ENCODE measurements at regions of chr1 and their contacts with region 1.

Region 1: DNA sequence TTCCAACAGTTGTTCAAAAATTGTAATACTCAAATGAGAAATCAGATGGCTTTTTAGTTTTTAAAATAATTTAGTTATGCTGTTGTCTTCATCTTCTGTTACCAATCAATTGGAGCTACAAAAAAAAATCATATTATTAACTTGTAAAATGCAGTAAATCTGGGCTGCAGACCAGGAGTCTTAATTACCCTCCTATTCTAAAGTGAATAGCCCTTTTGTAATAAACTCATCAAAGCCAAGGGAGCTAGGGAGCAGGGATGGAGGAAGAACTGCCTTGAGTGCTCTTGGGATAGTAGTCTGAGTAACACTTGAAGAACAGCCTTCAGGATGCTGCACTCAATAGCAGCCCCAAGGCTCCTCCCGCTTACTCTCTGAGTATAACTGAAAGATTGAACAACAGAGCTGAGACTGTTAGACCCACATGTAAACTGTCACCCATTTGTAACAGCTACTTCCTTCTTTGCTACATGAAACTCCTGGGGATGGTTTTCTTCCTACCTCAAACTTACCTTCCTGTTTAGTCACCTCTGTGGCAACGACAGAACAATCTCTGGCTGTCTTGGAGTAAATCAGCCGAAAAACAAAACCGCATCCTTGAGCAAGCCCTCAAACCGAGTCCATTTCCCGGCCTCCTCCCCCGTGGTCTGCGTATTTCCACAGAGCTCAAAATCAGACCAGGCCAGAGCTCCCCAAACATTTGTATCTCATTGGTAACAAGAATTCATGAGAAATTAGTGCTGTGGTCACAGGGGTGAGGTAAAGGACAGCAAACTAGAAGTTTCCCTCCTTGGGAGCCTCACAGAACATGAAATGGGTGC is 55.9 kb downstream of the CD58 start:
- DNase-seq: peak; percentile 73
- H3K4me3 Mint-ChIP-seq: no peak overlapping the region
- H3K27ac Mint-ChIP-seq: peak overlapping the region; percentile 76
- H3K4me1 Mint-ChIP-seq: peaks cover 33% of the 10 kb centered on the region
- H3K27me3 Mint-ChIP-seq: no peaks in the 10 kb centered on the region

Region 2: GRCh38 chr1:116538544-116538943 is 23.6 kb after region 1 on chr1:
- CTCF ChIA-PET with region 1: interaction called, 4 read pairs
- intact Hi-C with region 1: loop called (anchors 1 kb)
- DNase-seq: peak; percentile 64
- H3K4me3 Mint-ChIP-seq: no peak overlapping the region
- H3K27ac Mint-ChIP-seq: no peak overlapping the region
- H3K4me1 Mint-ChIP-seq: peaks cover 26% of the 10 kb centered on the region
- H3K27me3 Mint-ChIP-seq: no peaks in the 10 kb centered on the region

Region 3: DNA sequence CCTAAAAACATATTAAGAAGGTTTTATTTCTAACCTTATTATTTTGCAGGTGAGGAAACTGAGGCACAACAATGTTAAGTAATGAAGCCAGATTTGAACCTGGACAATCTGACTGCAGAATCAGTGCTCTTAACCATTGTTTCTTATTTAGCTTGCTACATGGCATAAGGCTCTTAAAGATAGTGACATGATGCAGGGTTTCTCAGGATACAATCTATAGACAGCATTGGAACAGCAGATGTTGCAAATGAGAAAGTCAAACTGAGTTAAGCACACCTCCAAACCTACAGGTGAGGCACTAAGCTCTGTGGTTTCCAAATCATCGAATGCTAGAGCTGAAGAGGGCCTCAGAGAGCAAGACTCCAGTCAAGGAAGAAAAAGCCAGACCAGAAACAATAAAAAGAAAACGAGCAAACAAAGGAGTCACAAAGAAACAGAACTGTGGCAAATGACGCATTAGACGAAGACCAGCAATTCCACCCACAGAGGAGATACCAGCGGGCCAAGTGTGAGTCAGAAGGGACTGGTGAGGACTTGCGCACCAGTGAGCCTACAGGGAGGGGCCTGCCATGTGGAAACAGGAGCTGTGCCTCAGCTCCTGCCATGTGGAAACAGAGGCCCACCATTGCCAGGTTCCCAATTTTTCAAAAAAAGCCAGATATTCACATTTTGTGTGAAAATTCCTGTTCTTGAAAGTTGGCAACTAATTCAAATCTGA is 41.5 kb after region 1 on chr1:
- CTCF ChIA-PET with region 1: interaction called, 4 read pairs
- intact Hi-C with region 1: loop called (anchors 1 kb)
- DNase-seq: peak; percentile 82
- H3K4me3 Mint-ChIP-seq: no peak overlapping the region
- H3K27ac Mint-ChIP-seq: peak overlapping the region; percentile 78
- H3K4me1 Mint-ChIP-seq: peaks cover 56% of the 10 kb centered on the region
- H3K27me3 Mint-ChIP-seq: no peaks in the 10 kb centered on the region